T-cell (primary cell): ENCODE measurements at regions of chr10 and their contacts with region 1.

Region 1: DNA sequence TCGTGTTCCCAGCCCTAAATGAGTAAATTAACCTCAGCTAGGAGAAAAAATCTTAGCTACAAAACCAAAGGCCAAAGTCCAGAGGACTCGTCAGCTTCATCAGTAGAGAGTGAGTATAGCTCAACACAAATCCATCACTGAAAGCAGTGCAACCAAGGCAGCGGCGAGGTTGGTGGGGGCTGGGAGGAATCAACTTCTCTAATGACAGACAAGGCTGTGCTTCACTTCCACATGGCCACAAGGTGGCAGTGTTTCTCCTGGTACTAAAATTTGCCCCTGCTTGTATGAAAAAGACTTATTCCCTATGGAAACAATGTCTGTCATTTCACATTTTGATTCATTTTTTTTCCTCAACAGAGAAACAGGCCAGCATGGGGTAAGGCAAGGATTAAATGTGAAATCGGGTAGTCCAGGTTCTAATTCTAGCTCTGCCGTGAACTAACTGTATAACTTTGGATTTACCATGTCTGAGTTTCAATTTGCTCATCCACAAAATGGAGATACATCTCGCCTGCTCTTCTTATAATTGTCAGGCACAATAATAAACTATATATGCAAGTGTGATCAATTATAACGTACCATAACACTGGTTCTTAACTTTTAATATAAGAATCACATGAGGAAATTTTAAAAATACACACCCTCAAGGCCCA is 39.3 kb downstream of the FAS start:
- DNase-seq: peak; percentile 24 to 83 (median 54)
- ATAC-seq: peak in 3 of 4 experiments; percentile 62 to 78 (median 64)
- H3K4me3 ChIP-seq: no peak overlapping the region
- H3K4me3 Mint-ChIP-seq: no peak overlapping the region
- H3K27ac ChIP-seq: no peak overlapping the region
- H3K27ac Mint-ChIP-seq: peak overlapping the region in 1 of 2 donors; percentile 50
- H3K4me1 ChIP-seq: peaks cover 0 to 3% of the 10 kb centered on the region in 2 experiments
- H3K4me1 Mint-ChIP-seq: peaks cover 7 to 9% (median 7%) of the 10 kb centered on the region in 3 donors
- H3K27me3 ChIP-seq: no peaks in the 10 kb centered on the region
- H3K27me3 Mint-ChIP-seq: no peaks in the 10 kb centered on the region

Region 2: GRCh38 chr10:89091496-89091895 is 61.6 kb after region 1 on chr10:
- CTCF ChIA-PET with region 1: no interaction called
- POLR2A ChIA-PET with region 1: no interaction called
- DNase-seq: no peak
- ATAC-seq: no peak
- H3K4me3 ChIP-seq: no peak overlapping the region
- H3K4me3 Mint-ChIP-seq: no peak overlapping the region
- H3K27ac ChIP-seq: no peak overlapping the region
- H3K27ac Mint-ChIP-seq: no peak overlapping the region
- H3K4me1 ChIP-seq: no peaks in the 10 kb centered on the region
- H3K4me1 Mint-ChIP-seq: peaks cover 3 to 9% (median 8%) of the 10 kb centered on the region in 3 donors
- H3K27me3 ChIP-seq: no peaks in the 10 kb centered on the region
- H3K27me3 Mint-ChIP-seq: peaks cover 0 to 5% of the 10 kb centered on the region in 2 donors

Region 3: DNA sequence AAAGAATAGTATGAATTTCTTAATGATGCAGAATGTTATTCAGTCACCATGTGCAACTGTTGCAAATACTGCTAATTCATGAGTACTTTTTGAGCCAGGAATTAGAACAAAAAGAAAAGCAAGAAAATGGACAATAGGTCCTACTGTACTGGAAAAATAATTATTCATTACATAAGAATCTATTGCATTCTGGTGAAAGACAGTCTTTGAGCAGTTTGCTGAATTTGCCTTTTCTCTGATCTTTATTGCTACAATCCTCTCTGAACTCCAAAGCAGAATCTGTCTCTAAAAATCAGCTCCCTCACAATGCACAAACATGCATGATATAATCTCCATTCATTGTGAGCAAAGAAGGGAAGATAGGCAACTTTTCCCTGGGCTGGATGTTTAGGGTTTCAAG is 284.8 kb after region 1 on chr10:
- CTCF ChIA-PET with region 1: interaction called in 1 of 2 experiments, 15 read pairs
- POLR2A ChIA-PET with region 1: no interaction called
- DNase-seq: no peak
- ATAC-seq: no peak
- H3K4me3 ChIP-seq: no peak overlapping the region
- H3K4me3 Mint-ChIP-seq: no peak overlapping the region
- H3K27ac ChIP-seq: no peak overlapping the region
- H3K27ac Mint-ChIP-seq: no peak overlapping the region
- H3K4me1 ChIP-seq: no peaks in the 10 kb centered on the region
- H3K4me1 Mint-ChIP-seq: peaks cover 0 to 7% (median 6%) of the 10 kb centered on the region in 3 donors
- H3K27me3 ChIP-seq: peaks cover 0 to 8% of the 10 kb centered on the region in 2 experiments
- H3K27me3 Mint-ChIP-seq: peaks cover 5% of the 10 kb centered on the region in 2 donors

Region 4: GRCh38 chr10:89369156-89370105 is 339.5 kb after region 1 on chr10:
- CTCF ChIA-PET with region 1: no interaction called
- POLR2A ChIA-PET with region 1: no interaction called
- DNase-seq: peak in 11 of 35 experiments; percentile 2 to 51 (median 10)
- ATAC-seq: peak in 1 of 4 experiments; percentile 60
- H3K4me3 ChIP-seq: no peak overlapping the region
- H3K4me3 Mint-ChIP-seq: no peak overlapping the region
- H3K27ac ChIP-seq: no peak overlapping the region
- H3K27ac Mint-ChIP-seq: no peak overlapping the region
- H3K4me1 ChIP-seq: peaks cover 0 to 8% of the 10 kb centered on the region in 2 experiments
- H3K4me1 Mint-ChIP-seq: peaks cover 12 to 21% (median 13%) of the 10 kb centered on the region in 3 donors
- H3K27me3 ChIP-seq: no peaks in the 10 kb centered on the region
- H3K27me3 Mint-ChIP-seq: peaks cover 0 to 20% of the 10 kb centered on the region in 2 donors

Region 5: DNA sequence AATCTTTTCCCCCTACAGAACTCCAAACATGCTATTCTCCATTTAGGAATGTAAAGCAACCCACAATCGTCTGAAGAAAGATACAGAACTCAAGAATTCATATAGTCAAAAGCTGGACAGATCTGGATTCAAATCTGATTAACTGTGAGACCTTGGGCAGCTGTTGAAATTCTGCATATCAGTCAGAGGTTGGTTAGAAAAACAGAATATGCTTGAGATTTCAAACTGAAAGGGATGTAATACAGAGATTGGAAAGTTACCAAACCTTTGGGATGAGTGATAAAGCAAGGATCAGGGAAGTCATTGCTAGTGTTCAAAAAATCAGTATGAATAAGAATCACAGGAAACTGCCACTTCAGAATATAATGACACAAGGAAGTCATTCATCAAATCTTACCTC is 1421.4 kb after region 1 on chr10:
- CTCF ChIA-PET with region 1: no interaction called
- POLR2A ChIA-PET with region 1: no interaction called
- DNase-seq: no peak
- ATAC-seq: no peak
- H3K4me3 ChIP-seq: no peak overlapping the region
- H3K4me3 Mint-ChIP-seq: no peak overlapping the region
- H3K27ac ChIP-seq: no peak overlapping the region
- H3K27ac Mint-ChIP-seq: no peak overlapping the region
- H3K4me1 ChIP-seq: no peaks in the 10 kb centered on the region
- H3K4me1 Mint-ChIP-seq: no peaks in the 10 kb centered on the region
- H3K27me3 ChIP-seq: no peaks in the 10 kb centered on the region
- H3K27me3 Mint-ChIP-seq: no peaks in the 10 kb centered on the region